AG04449 (cell line): ENCODE measurements at regions of chr17 and their contacts with region 1.

Region 1: GRCh38 chr17:81840826-81841778 is 6.3 kb upstream of the PPP1R27 start:
- DNase-seq: no peak
- H3K4me3 ChIP-seq: no peak overlapping the region
- CTCF ChIP-seq: no peak

Region 2: GRCh38 chr17:81821603-81822311 is 19.3 kb before region 1 on chr17:
- CTCF ChIA-PET with region 1: no interaction called
- POLR2A ChIA-PET with region 1: no interaction called
- DNase-seq: no peak
- H3K4me3 ChIP-seq: no peak overlapping the region
- CTCF ChIP-seq: peak; percentile 64

Region 3: DNA sequence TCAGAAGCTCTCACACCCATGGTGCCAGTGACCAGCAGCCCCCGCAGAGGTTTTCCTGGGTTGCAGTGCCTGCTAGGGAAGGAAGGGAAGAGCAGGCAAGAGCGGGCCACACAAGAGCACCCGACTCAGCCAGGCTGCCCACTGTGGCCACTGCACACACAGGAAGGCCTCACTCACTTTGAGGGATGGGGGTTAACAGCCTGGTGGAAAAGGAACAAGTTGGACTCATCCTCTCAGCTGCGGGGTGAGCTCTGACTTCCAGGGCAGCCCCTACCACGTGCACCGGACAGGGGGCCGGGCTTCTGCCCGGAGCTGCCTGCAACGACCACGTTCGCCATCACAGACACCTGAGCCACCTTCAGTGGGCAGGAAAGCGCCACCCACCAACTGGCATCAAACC is 11.1 kb after region 1 on chr17:
- CTCF ChIA-PET with region 1: interaction called, 12 read pairs
- POLR2A ChIA-PET with region 1: interaction called, 5 read pairs
- DNase-seq: no peak
- H3K4me3 ChIP-seq: no peak overlapping the region
- CTCF ChIP-seq: no peak

Region 4: DNA sequence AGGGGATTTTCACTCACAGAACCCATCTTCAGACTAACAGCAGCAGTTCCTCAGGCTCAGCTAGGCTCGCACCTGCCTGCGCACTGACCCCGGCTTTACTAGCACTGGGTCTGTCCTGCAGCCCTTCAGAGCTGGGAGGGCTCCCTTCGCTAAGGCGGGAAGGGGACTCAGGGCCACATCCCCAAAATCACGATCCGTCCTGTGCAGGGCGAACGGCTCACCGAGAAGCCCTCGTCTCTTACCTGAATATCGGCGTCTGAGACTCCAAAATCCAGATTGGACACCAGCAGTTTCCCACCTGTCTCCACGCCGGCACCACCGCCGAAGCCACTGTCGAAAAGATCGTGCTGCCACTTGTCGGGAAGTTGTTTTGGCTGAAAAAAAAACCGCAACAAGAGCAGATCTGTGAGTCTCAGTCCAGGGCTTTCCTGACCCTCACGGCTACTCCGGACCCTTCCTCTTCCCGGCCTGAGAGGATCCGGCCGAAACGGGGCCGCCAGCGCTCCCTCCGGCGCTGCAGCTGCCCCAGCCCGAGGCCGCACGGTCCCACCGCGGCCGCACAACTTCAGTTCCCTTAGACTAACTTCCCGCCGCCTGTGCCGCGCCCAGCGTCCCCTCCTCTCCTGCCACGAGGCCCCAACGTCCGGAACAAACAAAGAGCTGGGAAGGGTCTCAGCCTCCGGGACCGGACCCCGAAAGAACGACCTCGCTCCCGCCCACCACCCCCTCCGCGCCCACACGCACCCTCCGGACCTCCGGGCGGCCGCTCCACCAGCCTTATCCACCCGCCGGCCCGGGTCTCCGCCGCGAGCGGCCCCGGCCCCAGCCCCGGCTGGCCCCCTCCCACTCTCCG is 49.6 kb after region 1 on chr17:
- CTCF ChIA-PET with region 1: no interaction called
- POLR2A ChIA-PET with region 1: no interaction called
- DNase-seq: no peak
- H3K4me3 ChIP-seq: peak overlapping the region; percentile 81
- CTCF ChIP-seq: no peak

Region 5: DNA sequence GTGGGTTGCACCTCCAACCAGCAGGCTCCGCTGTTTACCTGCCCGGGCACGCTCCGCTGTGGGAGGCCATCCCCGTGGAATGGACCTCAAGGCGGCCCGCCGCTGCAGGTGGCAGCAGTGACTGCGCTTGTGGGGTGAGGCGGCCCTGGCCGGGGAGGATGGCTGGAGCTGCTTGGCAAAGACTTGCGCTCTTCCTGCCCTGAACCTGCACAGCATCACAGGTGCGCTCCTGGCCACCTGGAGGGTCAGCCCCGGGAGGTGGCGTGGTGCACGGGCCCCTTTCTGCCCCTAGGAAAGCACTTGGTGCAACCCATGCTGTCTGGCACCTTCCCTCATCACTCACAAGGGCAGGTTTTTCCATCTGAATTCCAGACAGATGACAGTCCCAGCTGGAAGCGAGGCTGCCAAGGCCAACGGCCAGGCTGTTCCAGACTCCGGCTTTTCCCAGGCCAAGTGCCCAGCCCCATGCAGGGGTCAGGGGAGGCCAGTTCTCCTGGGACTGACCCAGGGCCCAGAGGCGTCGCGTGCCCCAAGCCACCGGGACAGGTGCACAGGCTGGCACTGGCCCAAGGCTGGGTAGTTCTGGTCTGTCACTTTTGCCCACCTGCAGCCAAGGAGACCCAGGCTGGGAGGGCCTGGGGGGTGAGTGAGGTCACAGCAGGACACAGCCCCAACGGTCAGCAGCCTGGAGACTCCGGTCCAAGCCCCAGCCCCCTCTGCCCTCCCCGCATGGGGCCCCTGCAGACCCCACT is 543.8 kb after region 1 on chr17:
- CTCF ChIA-PET with region 1: no interaction called
- POLR2A ChIA-PET with region 1: no interaction called
- DNase-seq: no peak
- H3K4me3 ChIP-seq: no peak overlapping the region
- CTCF ChIP-seq: no peak